ENCODE measurements at regions of chr4 and their contacts with region 1.

Region 1: GRCh38 chr4:88706574-88706973 is 8.9 kb upstream of the NAP1L5 start:
- DNase-seq: peak in 1 of 2 donors; percentile 79
- H3K4me3 ChIP-seq: peak overlapping the region in 1 of 2 donors; percentile 38
- H3K27ac ChIP-seq: peak overlapping the region; percentile 45 to 79
- H3K4me1 ChIP-seq: peaks cover 3% of the 10 kb centered on the region in 2 donors
- H3K27me3 ChIP-seq: no peaks in the 10 kb centered on the region
- CTCF ChIP-seq: peak; percentile 42 to 78 (median 63)

Region 2: GRCh38 chr4:88765729-88766128 is 59.2 kb after region 1 on chr4:
- intact Hi-C with region 1: loop called (anchors 5 kb)
- DNase-seq: peak in 1 of 2 donors; percentile 82
- H3K4me3 ChIP-seq: no peak overlapping the region
- H3K27ac ChIP-seq: peak overlapping the region; percentile 16 to 41
- H3K4me1 ChIP-seq: peaks cover 0 to 14% of the 10 kb centered on the region in 2 donors
- H3K27me3 ChIP-seq: no peaks in the 10 kb centered on the region
- CTCF ChIP-seq: no peak

Region 3: GRCh38 chr4:88792268-88792781 is 85.8 kb after region 1 on chr4:
- intact Hi-C with region 1: loop called (anchors 5 kb)
- DNase-seq: no peak
- H3K4me3 ChIP-seq: no peak overlapping the region
- H3K27ac ChIP-seq: peak overlapping the region; percentile 19 to 21
- H3K4me1 ChIP-seq: peaks cover 0 to 4% of the 10 kb centered on the region in 2 donors
- H3K27me3 ChIP-seq: no peaks in the 10 kb centered on the region
- CTCF ChIP-seq: no peak

Region 4: DNA sequence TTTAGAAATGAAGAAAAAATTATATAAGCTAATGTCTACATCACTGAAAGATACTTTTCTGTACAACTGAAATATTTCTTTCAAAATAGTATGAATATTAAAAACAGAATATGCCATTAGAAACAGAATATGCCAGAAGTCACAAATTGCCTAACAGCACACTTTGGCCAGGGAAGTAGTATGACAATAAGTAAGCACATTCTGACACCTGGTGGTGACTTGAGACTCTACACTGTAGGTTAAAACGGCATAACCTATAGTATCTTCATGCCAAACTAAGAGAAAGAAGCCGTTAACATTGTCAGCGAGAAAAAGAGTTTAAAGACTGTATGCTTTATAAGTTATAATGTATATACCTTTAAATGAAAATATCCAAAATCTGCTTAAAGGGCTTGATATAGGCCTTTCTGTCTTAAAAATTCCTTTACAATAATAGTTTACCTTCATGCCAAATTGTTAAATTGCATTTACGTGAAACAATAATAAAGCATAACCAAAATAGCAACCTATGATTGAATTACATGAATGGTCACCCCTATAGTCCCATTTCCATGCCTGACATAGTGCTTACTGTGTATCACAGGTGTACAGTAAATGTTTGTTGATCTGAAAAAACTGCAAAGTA is 317.6 kb after region 1 on chr4:
- intact Hi-C with region 1: loop called (anchors 1 kb)
- DNase-seq: peak in 1 of 2 donors; percentile 77
- H3K4me3 ChIP-seq: no peak overlapping the region
- H3K27ac ChIP-seq: no peak overlapping the region
- H3K4me1 ChIP-seq: no peaks in the 10 kb centered on the region
- H3K27me3 ChIP-seq: no peaks in the 10 kb centered on the region
- CTCF ChIP-seq: peak; percentile 71 to 85 (median 81)

Measured in ascending aorta (tissue), 2 donors.